Left cardiac atrium (tissue), 4 donors: ENCODE measurements at regions of chr22 and their contacts with region 1.

Region 1: GRCh38 chr22:30634471-30635233 is 929 bp upstream of the SLC35E4 start:
- DNase-seq: peak; percentile 86
- ATAC-seq: peak; percentile 67 to 75

Region 2: DNA sequence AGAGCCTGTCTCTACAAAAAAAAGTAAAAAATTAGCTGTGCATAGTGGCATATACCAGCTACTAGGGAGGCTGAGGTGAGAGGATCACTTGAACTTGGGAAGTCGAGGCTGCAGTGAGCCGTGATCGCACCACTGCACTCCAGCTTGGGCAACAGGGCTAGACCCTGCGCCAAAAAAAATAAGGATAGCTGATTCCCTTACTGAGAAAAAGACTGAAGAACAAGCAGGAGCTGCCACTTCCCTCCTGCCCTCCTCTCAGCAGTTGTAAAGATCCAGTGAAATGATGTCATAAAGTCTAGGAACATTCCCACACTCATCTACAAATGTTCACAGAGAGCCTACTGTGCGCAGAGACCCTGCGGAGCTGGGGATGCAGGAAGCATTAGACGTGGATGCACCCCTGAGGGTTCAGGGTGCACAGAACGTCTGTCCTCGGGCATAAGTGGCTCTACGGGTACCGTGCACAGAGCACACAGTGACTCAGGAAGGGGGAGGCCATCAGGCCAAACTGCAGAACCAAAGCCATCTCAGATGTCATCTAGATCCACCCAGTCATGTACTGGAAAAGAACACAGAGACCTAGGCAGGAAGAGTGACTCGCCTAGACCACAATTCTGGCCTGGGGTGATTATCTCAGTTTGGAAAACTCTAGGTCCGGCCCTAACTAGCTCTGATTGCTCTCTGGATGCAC is 226.1 kb before region 1 on chr22:
- intact Hi-C with region 1: no loop called
- DNase-seq: no peak
- ATAC-seq: peak in 1 of 2 donors; percentile 64

Region 3: DNA sequence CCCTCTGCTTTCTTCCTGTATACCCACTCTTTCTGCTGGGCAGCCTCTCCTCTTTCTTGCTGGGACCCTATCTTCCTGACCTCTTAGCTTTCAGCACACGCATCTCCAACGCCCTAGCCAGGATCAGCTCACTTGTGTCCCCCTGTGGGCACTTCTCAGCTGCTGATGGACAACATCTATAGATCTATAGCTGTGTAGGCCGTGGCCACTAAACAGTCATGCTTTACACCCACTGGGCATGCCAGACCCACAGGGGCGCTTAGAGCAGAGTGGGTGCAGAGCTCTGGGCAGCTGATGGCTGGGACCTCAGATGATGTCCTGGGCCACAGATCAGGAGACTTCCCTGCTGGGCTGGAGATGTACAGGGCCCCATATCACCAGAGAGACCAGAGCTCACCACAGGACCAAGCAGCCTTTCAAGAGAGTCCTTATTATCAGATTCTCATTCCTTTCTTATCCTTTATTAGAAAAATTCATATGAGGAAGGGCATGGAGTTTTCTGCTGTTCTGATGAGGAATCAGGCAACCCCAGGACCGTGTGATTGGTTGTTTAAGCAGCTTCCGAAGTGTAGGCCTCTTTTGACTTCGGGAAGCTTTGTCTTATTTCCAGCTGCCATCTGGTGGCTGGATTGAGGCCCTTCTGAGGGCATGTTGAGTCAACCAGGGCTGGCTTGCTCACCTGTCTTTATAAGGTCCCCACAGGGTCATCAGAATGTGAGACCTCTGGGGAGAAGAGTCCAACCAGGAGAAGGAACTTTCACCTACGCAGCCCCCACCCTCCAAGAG is 120.5 kb after region 1 on chr22:
- intact Hi-C with region 1: loop called (anchors 1 to 5 kb)
- DNase-seq: peak; percentile 54
- ATAC-seq: peak; percentile 87

Region 4: DNA sequence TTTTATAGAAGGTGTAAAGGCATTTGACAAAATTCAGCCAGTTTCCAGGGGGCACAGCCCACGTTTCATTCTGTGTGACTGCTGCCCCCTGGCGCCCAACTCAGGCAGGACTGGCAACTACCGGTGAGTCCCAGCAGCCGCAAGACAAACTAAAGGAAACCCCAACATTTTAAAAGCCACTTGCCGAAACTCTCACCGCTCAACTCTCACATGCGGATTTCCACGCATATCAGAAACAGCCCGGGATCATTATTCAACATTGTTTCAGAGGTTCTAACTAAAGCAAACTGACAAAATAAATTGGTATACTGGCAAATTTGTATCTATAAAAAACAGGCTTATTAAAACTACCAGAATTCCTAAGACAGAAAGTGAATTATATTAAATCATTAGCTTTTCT is 285.8 kb after region 1 on chr22:
- intact Hi-C with region 1: loop called (anchors 5 to 10 kb)
- DNase-seq: peak; percentile 83
- ATAC-seq: peak; percentile 71